T-cell (primary cell): ENCODE measurements at regions of chr9 and their contacts with region 1.

Region 1: GRCh38 chr9:137277329-137278041 is at the start of gene TOR4A:
- DNase-seq: peak in 6 of 35 experiments; percentile 12 to 51 (median 30)
- ATAC-seq: peak; percentile 46 to 69 (median 60)
- H3K4me3 ChIP-seq: peak within 1 kb of the TSS; percentile 44 to 61
- H3K4me3 Mint-ChIP-seq: peak within 1 kb of the TSS; percentile 64 to 76 (median 67)
- H3K27ac ChIP-seq: peak within 1 kb of the TSS; percentile 14
- H3K27ac Mint-ChIP-seq: no peak within 1 kb of the TSS
- H3K4me1 ChIP-seq: peaks cover 9 to 28% of the 10 kb centered on the region in 2 experiments
- H3K4me1 Mint-ChIP-seq: peaks cover 11 to 26% (median 24%) of the 10 kb centered on the region in 3 donors
- H3K27me3 ChIP-seq: peaks cover 0 to 43% of the 10 kb centered on the region in 2 experiments
- H3K27me3 Mint-ChIP-seq: peaks cover 0 to 20% of the 10 kb centered on the region in 2 donors
- total RNA-seq, gene TOR4A: 2.2 to 5.6 (median 3.2) TPM

Region 2: GRCh38 chr9:137046098-137046787 is 231.2 kb before region 1 on chr9 and contains the start of gene NPDC1:
- CTCF ChIA-PET with region 1: no interaction called
- POLR2A ChIA-PET with region 1: no interaction called
- DNase-seq: peak; percentile 46 to 87 (median 71)
- ATAC-seq: peak; percentile 76 to 81 (median 78)
- H3K4me3 ChIP-seq: peak within 1 kb of the TSS; percentile 50 to 55
- H3K4me3 Mint-ChIP-seq: peak within 1 kb of the TSS; percentile 63 to 81 (median 76)
- H3K27ac ChIP-seq: no peak within 1 kb of the TSS
- H3K27ac Mint-ChIP-seq: no peak within 1 kb of the TSS
- H3K4me1 ChIP-seq: peaks cover 11 to 48% of the 10 kb centered on the region in 2 experiments
- H3K4me1 Mint-ChIP-seq: peaks cover 8 to 22% (median 20%) of the 10 kb centered on the region in 3 donors
- H3K27me3 ChIP-seq: peaks cover 2 to 91% of the 10 kb centered on the region in 2 experiments
- H3K27me3 Mint-ChIP-seq: peaks cover 6 to 54% of the 10 kb centered on the region in 2 donors
- total RNA-seq, gene NPDC1: 32.4 to 76.7 (median 57.0) TPM

Region 3: GRCh38 chr9:137254624-137255447 is 22.6 kb before region 1 on chr9 and contains the start of gene NELFB:
- CTCF ChIA-PET with region 1: no interaction called
- POLR2A ChIA-PET with region 1: no interaction called
- DNase-seq: peak; percentile 81 to 98 (median 92)
- ATAC-seq: peak; percentile 89 to 93 (median 90)
- H3K4me3 ChIP-seq: peak within 1 kb of the TSS; percentile 75 to 87
- H3K4me3 Mint-ChIP-seq: peak within 1 kb of the TSS; percentile 82 to 90 (median 85)
- H3K27ac ChIP-seq: peak within 1 kb of the TSS; percentile 23
- H3K27ac Mint-ChIP-seq: peak within 1 kb of the TSS; percentile 81 to 83
- H3K4me1 ChIP-seq: peaks cover 4 to 28% of the 10 kb centered on the region in 2 experiments
- H3K4me1 Mint-ChIP-seq: peaks cover 11 to 16% (median 15%) of the 10 kb centered on the region in 3 donors
- H3K27me3 ChIP-seq: no peaks in the 10 kb centered on the region
- H3K27me3 Mint-ChIP-seq: no peaks in the 10 kb centered on the region
- total RNA-seq, gene NELFB: 36.1 to 62.2 (median 58.8) TPM

Region 4: DNA sequence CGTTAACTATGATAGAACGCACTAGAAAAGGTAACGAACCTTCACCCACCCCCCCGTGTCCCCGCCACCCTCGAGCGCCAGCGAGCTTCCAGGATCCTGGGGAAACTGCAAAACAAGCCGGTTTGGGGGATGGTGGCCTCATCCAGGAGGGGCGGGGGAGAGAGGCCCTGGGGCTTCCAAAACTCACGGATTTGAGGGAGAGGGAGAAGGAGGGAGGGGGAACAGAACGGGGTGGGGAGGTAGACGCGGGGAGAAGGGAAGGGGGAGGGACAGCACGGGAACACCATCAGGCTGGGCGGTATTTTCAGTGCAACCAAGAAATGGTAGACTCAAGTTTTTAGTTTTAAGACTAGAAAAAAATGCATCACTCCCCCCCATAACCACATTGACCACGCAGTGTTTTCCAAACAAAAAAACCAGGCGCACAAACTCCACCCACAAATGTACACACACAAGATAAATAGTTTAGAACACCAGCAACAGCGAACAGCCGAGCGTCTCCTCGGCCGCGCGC is 23.1 kb after region 1 on chr9:
- CTCF ChIA-PET with region 1: interaction called in 1 of 2 experiments, 3 read pairs
- POLR2A ChIA-PET with region 1: interaction called in 1 of 2 experiments, 15 read pairs
- DNase-seq: no peak
- ATAC-seq: no peak
- H3K4me3 ChIP-seq: peak overlapping the region in 1 of 2 donors; percentile 82
- H3K4me3 Mint-ChIP-seq: peak overlapping the region; percentile 68 to 81 (median 71)
- H3K27ac ChIP-seq: no peak overlapping the region
- H3K27ac Mint-ChIP-seq: no peak overlapping the region
- H3K4me1 ChIP-seq: peaks cover 3 to 54% of the 10 kb centered on the region in 2 experiments
- H3K4me1 Mint-ChIP-seq: peaks cover 15 to 25% (median 16%) of the 10 kb centered on the region in 3 donors
- H3K27me3 ChIP-seq: peaks cover 7 to 70% of the 10 kb centered on the region in 2 experiments
- H3K27me3 Mint-ChIP-seq: peaks cover 14 to 29% of the 10 kb centered on the region in 2 donors